Activated naive CD4-positive, alpha-beta T cell treated with anti-CD3 and anti-CD28 coated beads, Interleukin-2, amount 10 ng/mL, durations not matched to agents 7 days and 5 days (primary cell): ENCODE measurements at regions of chr20 and their contacts with region 1.

Region 1: GRCh38 chr20:59087829-59088433 is 45.3 kb upstream of the PRELID3B start:
- DNase-seq: peak; percentile 88
- H3K4me3 Mint-ChIP-seq: no peak overlapping the region
- H3K27ac Mint-ChIP-seq: no peak overlapping the region
- H3K4me1 Mint-ChIP-seq: peaks cover 4% of the 10 kb centered on the region
- H3K27me3 Mint-ChIP-seq: peaks cover 32% of the 10 kb centered on the region

Region 2: DNA sequence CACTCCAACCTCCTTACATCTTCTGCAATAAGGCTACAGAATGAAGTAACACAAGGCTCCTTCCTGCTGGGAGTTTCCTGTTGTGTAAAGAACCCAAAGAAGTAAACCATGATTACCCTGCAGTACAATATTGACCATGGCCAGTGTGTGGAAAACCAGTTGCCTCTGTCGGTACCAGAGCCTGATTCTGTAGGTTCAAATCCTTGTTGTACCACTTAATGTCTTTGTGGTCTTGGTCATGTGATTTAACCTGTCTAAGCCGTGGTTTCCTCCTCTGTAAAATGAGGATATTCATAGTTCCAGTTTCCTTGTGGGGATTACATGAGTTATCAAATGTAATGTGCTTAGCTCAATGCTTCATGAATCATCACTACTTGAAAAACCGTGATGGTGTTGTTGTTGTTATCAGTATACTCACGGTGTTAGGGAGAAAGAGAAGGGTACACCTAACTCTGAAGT is 14.9 kb after region 1 on chr20:
- CTCF ChIA-PET with region 1: interaction called, 10 read pairs
- DNase-seq: no peak
- H3K4me3 Mint-ChIP-seq: no peak overlapping the region
- H3K27ac Mint-ChIP-seq: no peak overlapping the region
- H3K4me1 Mint-ChIP-seq: peaks cover 9% of the 10 kb centered on the region
- H3K27me3 Mint-ChIP-seq: peaks cover 22% of the 10 kb centered on the region

Region 3: GRCh38 chr20:59159493-59160376 is 71.8 kb after region 1 on chr20:
- CTCF ChIA-PET with region 1: interaction called, 10 read pairs
- DNase-seq: peak; percentile 75
- H3K4me3 Mint-ChIP-seq: peak overlapping the region; percentile 82
- H3K27ac Mint-ChIP-seq: peak overlapping the region; percentile 95
- H3K4me1 Mint-ChIP-seq: peaks cover 74% of the 10 kb centered on the region
- H3K27me3 Mint-ChIP-seq: peaks cover under 1% of the 10 kb centered on the region

Region 4: GRCh38 chr20:59222253-59223181 is 134.6 kb after region 1 on chr20:
- CTCF ChIA-PET with region 1: interaction called, 27 read pairs
- DNase-seq: peak; percentile 85
- H3K4me3 Mint-ChIP-seq: peak overlapping the region; percentile 69
- H3K27ac Mint-ChIP-seq: peak overlapping the region; percentile 78
- H3K4me1 Mint-ChIP-seq: peaks cover 20% of the 10 kb centered on the region
- H3K27me3 Mint-ChIP-seq: peaks cover 4% of the 10 kb centered on the region